Activated T-helper 1 cell treated with anti-CD3 and anti-CD28 coated beads, Interleukin-12 subunit alpha, Interleukin-12 subunit beta, Interleukin-2, Interleukin-4 antibody, amounts not matched to agents 30 ng/mL and 10 ng/mL and 1 ng/mL, durations not matched to agents 14 hours and 24 hours and 36 hours (primary cell): ENCODE measurements at regions of chr19 and their contacts with region 1.

Region 1: DNA sequence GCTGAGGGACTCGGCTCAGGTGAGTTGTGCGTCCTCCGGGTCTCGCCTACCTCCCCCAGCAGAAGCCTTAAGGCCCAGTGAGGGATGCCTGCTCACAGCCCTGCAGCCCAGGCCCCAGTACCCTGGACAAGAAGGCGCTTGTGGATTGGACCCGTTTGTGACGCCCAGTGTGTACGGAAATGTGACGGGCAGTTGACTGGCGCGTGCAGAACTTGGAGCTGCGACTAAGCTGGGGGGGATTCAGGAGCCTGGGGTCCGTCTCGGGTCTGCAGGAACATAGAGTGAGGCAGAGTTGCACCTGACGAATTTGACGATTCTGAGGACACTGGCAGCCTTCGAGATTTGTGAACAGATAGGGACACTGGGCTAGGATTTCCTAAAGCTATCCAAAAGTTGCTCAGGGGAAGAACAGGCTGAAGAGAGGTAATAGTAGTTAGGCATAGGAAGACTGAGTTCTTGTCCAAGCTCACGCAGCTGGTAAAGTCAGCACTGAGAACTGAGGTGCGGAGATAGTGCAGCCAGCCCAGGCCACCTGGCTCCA is 519 bp downstream of the ZNF551 start:
- DNase-seq: no peak
- H3K4me3 Mint-ChIP-seq: peak overlapping the region; percentile 96
- H3K27ac Mint-ChIP-seq: peak overlapping the region; percentile 92
- H3K4me1 Mint-ChIP-seq: peaks cover 22% of the 10 kb centered on the region
- H3K27me3 Mint-ChIP-seq: no peaks in the 10 kb centered on the region

Region 2: DNA sequence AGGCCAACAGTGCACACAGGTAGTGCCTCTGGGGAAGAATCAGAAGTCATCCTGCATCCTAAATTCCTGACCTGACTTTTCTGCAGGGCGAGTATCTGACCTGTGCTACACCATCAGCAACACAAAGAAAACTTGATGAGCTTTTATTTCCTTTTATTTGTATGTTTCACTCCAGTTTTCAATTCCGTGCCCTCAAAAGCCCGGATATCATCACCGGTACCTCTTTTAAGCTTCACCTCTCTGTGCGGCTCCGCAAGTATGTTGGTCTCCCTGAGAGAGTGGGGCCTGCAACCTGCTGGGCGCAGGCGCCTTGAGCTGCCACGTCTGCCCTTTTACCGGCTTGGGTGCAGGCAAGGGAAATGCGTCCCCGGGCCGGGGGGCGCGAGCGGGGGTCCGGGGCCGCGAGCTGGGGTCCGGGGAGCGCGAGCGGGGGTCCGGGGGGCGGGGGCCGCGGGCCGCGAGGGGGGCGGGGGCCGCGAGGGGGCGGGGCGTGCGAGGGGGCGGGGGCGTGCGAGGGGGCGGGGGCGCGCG is 510.7 kb before region 1 on chr19:
- intact Hi-C with region 1: no loop called
- DNase-seq: no peak
- H3K4me3 Mint-ChIP-seq: peak overlapping the region; percentile 50
- H3K27ac Mint-ChIP-seq: no peak overlapping the region
- H3K4me1 Mint-ChIP-seq: peaks cover 5% of the 10 kb centered on the region
- H3K27me3 Mint-ChIP-seq: no peaks in the 10 kb centered on the region

Region 3: GRCh38 chr19:57477191-57478008 is 204.9 kb before region 1 on chr19 and contains the start of gene ZNF772:
- intact Hi-C with region 1: loop called (anchors 5 kb)
- DNase-seq: peak; percentile 80
- H3K4me3 Mint-ChIP-seq: peak within 1 kb of the TSS; percentile 90
- H3K27ac Mint-ChIP-seq: peak within 1 kb of the TSS; percentile 89
- H3K4me1 Mint-ChIP-seq: peaks cover 11% of the 10 kb centered on the region
- H3K27me3 Mint-ChIP-seq: no peaks in the 10 kb centered on the region
- total RNA-seq, gene ZNF772: 1.5 and 2.4 TPM in 2 replicates

Region 4: DNA sequence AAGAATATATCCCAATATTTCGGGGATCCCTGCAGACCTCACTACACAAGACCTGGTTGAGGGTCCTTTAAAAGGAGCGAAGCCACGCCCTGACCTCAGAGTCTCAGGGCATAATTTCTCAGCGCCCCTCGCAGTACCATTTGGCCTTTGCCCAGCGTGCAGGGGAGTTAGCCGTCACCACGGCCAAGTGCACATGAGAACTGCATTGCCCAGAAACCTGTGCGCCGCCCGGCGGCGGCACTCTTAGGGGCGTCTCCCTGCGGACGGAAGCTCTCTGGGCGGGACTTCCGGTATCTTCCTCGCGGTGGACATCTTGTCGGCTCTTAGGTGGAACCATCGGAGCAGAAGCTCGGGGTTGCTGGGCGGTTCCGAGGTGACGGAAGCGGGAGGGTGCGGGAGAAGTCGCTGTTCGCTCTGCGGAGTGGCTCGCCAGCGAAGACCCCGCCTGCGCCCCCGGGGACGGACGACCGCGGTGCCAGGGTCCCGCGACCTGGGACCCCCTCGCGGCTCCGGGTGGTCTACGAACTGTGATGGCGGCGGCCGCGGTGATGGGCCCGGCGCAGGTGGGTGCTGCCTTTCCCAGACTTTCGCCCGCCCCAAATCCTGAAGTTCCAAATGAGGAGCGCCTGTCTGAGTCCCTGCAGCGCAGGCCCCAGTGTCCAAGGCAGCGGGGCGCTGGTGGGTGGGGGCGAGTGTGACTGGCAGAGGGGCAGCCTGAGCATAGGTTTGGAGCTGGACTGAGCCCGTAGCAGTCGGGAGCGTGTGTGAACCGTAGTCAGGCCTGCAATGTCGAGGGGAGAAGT is 68.2 kb before region 1 on chr19 and contains the start of gene ZNF134:
- intact Hi-C with region 1: loop called (anchors 1 kb)
- DNase-seq: peak; percentile 84
- H3K4me3 Mint-ChIP-seq: peak within 1 kb of the TSS; percentile 90
- H3K27ac Mint-ChIP-seq: peak within 1 kb of the TSS; percentile 78
- H3K4me1 Mint-ChIP-seq: peaks cover 11% of the 10 kb centered on the region
- H3K27me3 Mint-ChIP-seq: no peaks in the 10 kb centered on the region
- total RNA-seq, gene ZNF134: 8.4 and 9.4 TPM in 2 replicates

Region 5: GRCh38 chr19:57746580-57747471 is 64.5 kb after region 1 on chr19 and contains the start of gene ZNF776:
- intact Hi-C with region 1: loop called (anchors 1 kb)
- DNase-seq: peak; percentile 79
- H3K4me3 Mint-ChIP-seq: peak within 1 kb of the TSS; percentile 90
- H3K27ac Mint-ChIP-seq: peak within 1 kb of the TSS; percentile 93
- H3K4me1 Mint-ChIP-seq: peaks cover 12% of the 10 kb centered on the region
- H3K27me3 Mint-ChIP-seq: peaks cover 2% of the 10 kb centered on the region
- total RNA-seq, gene ZNF776: 6.8 and 6.9 TPM in 2 replicates

Region 6: DNA sequence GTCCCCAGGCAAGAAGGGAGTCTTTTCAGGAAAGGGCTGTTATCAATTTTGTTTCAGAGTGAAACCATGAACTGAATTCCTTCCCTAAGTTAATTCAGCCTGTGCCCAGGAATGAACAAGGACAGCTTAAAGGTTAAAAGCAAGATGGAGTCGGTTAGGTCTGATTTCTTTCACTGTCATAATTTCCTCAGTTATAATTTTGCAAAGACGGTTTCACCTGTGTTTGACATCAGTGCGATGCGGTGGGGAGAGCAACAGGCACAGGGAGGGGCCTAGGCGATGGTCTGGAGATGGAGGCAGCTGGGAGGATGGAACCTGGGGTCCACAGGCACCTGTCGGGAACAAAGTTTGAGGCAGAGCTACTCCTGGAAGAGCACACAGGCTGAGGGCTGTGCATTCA is 138.3 kb after region 1 on chr19:
- intact Hi-C with region 1: no loop called
- DNase-seq: no peak
- H3K4me3 Mint-ChIP-seq: peak overlapping the region; percentile 99
- H3K27ac Mint-ChIP-seq: peak overlapping the region; percentile 98
- H3K4me1 Mint-ChIP-seq: peaks cover 42% of the 10 kb centered on the region
- H3K27me3 Mint-ChIP-seq: no peaks in the 10 kb centered on the region

Region 7: DNA sequence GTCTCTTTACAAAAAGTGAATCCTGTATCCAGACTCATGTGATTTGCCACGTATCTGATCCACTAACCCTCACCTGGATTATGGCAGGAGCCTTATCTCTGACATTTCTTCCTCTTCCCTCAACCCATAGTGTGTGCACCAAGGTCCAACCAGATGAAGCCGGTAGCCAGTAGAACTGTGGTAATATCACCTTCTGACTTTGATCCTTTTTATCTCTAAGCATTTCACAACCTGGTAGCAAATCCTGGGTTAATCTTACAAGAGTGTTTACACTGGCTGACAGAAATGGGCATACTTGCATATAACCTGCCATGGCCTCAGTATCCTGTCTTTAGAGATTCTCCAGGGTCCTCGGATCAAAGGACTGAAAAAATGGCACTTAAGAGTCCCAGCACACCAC is 232.2 kb after region 1 on chr19:
- intact Hi-C with region 1: loop called (anchors 1 kb)
- DNase-seq: no peak
- H3K4me3 Mint-ChIP-seq: peak overlapping the region; percentile 91
- H3K27ac Mint-ChIP-seq: no peak overlapping the region
- H3K4me1 Mint-ChIP-seq: peaks cover 15% of the 10 kb centered on the region
- H3K27me3 Mint-ChIP-seq: no peaks in the 10 kb centered on the region